ENCODE measurements at regions of chr16 and their contacts with region 1.

Region 1: GRCh38 chr16:10918294-10919002 is 23.8 kb downstream of the DEXI start:
- DNase-seq: peak; percentile 71
- H3K4me3 Mint-ChIP-seq: no peak overlapping the region
- H3K27ac Mint-ChIP-seq: no peak overlapping the region
- H3K4me1 Mint-ChIP-seq: peaks cover 30% of the 10 kb centered on the region
- H3K27me3 Mint-ChIP-seq: no peaks in the 10 kb centered on the region

Region 2: DNA sequence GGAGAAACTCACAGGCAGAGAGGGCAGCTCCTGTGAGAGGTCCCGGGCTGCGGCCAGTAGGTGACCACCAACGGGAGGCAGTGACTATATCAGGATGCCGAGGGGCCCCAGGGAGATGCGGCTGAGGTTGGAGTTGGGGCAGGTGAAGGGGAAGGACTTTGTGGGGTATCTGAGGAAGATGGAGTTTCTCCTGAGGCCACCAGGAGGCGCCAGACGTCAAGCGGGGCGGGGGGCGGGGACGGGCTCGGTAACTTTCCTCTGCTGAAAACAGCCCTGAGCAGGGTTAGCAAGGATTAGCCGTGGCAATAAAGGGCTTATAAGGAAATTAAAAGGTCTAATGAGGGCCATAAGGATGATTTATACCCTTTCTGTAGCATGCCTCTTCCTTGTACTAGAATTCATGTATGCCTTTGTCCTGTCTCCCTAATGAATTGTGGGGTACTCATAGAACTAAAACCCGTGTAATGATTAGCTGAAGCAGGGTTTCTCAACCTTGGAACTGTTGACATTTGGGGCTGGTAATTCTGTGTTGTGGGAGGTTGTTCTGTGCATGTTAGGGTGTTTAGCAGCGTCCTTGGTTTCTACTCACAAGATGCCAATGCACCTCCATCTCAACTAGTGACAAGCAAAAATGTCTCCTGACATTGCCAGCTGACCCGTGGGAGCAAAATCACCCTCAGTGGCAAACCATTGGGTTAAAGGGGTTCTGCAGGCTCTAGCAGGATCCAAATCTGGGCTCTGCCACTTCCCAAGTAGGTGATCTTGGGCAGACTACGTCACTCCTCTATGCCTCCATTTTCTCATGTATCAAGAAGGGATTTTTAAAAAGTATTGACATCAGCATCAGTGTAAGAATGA is 661.4 kb before region 1 on chr16:
- intact Hi-C with region 1: loop called (anchors 5 kb)
- DNase-seq: peak; percentile 6
- H3K4me3 Mint-ChIP-seq: no peak overlapping the region
- H3K27ac Mint-ChIP-seq: no peak overlapping the region
- H3K4me1 Mint-ChIP-seq: no peaks in the 10 kb centered on the region
- H3K27me3 Mint-ChIP-seq: no peaks in the 10 kb centered on the region

Region 3: DNA sequence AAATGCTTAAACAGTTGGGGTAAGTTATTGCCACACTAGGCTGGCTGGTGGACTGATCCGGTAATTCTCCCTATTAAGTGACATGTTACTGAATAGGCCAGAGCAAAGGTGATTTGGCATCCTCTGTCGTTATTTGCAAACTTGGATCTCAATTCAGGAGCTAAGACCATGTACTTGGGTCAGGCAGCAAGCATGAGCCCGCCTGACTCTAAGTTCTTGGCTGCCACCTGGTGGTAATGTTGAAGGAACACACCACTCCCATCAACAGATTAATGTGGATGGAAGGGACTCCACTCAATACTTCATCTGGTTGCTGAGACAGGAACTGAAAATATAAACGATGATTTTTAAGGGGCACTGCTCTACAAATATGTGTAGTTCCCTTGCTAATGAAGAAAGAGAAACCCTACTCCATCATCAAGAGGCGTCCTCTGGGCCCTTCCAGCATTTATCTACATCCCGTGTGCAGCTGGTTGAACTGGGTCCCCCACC is 408.9 kb before region 1 on chr16:
- intact Hi-C with region 1: loop called (anchors 1 kb)
- DNase-seq: peak; percentile 49
- H3K4me3 Mint-ChIP-seq: no peak overlapping the region
- H3K27ac Mint-ChIP-seq: peak overlapping the region; percentile 64
- H3K4me1 Mint-ChIP-seq: peaks cover 11% of the 10 kb centered on the region
- H3K27me3 Mint-ChIP-seq: peaks cover 14% of the 10 kb centered on the region

Region 4: DNA sequence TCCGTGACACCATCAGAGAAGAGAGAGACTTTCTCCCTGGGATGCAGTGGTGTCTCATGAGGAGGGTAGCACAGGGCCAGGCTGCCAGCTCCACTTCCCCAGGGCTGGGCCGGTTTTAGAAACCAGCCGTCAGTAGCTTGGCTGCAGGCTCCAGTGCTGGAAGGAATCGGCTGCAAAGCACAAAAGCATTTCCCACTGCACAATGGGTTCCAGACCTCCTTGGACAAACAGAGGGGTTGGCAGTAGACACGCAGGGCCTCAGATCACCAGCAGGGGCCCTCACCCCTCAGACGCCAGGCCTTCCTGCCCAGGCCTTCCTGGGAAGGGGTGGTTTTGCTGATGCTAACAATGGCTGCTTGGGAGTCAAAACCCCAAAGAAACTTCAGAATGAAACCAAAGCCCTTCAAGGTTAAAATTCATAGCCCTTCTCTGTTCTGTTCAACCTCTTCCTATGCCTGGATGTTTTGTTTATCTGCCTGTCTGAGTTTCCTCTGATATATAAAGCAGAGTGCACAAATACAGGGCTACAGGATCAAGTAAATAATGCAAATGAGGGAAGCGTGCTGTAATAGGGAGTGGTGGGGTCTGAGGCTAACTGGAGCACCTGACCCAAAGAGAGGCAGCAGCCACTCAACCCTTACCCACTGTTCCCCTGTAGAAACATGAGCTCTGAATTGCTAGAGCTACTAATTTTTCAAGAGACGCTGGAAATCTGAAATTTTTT is 250.0 kb before region 1 on chr16:
- intact Hi-C with region 1: loop called (anchors 2 kb)
- DNase-seq: no peak
- H3K4me3 Mint-ChIP-seq: no peak overlapping the region
- H3K27ac Mint-ChIP-seq: no peak overlapping the region
- H3K4me1 Mint-ChIP-seq: no peaks in the 10 kb centered on the region
- H3K27me3 Mint-ChIP-seq: peaks cover 3% of the 10 kb centered on the region

Region 5: DNA sequence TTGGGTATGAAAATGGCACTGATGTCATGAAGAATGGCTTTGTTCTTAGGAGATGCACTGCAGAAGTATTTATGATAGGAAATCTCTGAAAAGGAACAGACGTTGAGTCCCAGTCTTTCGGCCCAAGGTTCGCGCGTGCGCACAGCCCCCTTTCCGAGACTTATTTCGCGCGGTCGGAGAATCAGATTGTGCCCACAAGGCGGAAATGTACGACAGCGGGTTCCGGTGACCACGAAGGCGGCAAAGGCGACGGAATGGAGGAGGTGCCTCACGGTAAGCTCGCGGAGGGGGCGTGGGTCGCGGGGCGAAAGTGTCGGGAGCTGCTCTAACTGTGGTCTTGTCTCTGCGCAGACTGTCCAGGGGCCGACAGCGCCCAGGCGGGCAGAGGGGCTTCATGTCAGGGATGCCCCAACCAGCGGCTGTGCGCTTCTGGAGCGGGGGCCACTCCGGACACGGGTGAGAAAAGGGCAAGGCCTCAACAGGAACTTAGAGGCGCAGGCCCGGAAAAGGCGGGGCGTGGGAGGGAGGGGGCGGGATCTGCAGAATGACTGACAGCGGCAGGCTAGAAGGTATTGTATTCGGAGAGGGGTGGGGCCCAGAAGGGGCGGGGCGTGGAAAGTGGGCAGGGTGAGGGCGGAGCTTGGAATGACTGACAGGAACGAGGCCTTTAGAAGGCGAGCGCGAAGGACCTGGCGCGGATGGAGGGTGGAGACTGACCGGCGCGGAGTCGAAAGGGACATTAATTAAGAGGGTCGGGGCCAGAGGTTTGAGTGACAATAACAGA is 174.6 kb before region 1 on chr16 and contains the start of gene NUBP1:
- intact Hi-C with region 1: loop called (anchors 1 kb)
- DNase-seq: peak; percentile 97
- H3K4me3 Mint-ChIP-seq: peak within 1 kb of the TSS; percentile 87
- H3K27ac Mint-ChIP-seq: peak within 1 kb of the TSS; percentile 93
- H3K4me1 Mint-ChIP-seq: peaks cover 57% of the 10 kb centered on the region
- H3K27me3 Mint-ChIP-seq: no peaks in the 10 kb centered on the region
- total RNA-seq, gene NUBP1: 39.8 and 42.4 TPM in 2 replicates

Region 6: GRCh38 chr16:10871149-10871991 is 47.1 kb before region 1 on chr16:
- intact Hi-C with region 1: loop called (anchors 1 kb)
- DNase-seq: peak; percentile 63
- H3K4me3 Mint-ChIP-seq: peak overlapping the region; percentile 57
- H3K27ac Mint-ChIP-seq: peak overlapping the region; percentile 82
- H3K4me1 Mint-ChIP-seq: peaks cover 86% of the 10 kb centered on the region
- H3K27me3 Mint-ChIP-seq: peaks cover 13% of the 10 kb centered on the region